Activated CD4-positive, alpha-beta T cell treated with anti-CD3 and anti-CD28 coated beads for 36 hours (primary cell): ENCODE measurements at regions of chr19 and their contacts with region 1.

Region 1: GRCh38 chr19:39953915-39954314 is 17.1 kb upstream of the PSMC4 start:
- DNase-seq: no peak
- ATAC-seq: peak; percentile 4
- H3K4me3 Mint-ChIP-seq: peak overlapping the region; percentile 15
- H3K27ac Mint-ChIP-seq: peak overlapping the region; percentile 81
- H3K4me1 Mint-ChIP-seq: peaks cover 71% of the 10 kb centered on the region
- H3K27me3 Mint-ChIP-seq: no peaks in the 10 kb centered on the region

Region 2: GRCh38 chr19:39941615-39942365 is 12.1 kb before region 1 on chr19:
- CTCF ChIA-PET with region 1: interaction called, 5 read pairs
- POLR2A ChIA-PET with region 1: interaction called, 3 read pairs
- intact Hi-C with region 1: loop called in 1 of 2 experiments (anchors 1 kb)
- DNase-seq: peak; percentile 58
- ATAC-seq: peak; percentile 54
- H3K4me3 Mint-ChIP-seq: peak overlapping the region; percentile 54
- H3K27ac Mint-ChIP-seq: peak overlapping the region; percentile 79
- H3K4me1 Mint-ChIP-seq: peaks cover 77% of the 10 kb centered on the region
- H3K27me3 Mint-ChIP-seq: no peaks in the 10 kb centered on the region